ENCODE measurements at regions of chr11 and their contacts with region 1.

Region 1: DNA sequence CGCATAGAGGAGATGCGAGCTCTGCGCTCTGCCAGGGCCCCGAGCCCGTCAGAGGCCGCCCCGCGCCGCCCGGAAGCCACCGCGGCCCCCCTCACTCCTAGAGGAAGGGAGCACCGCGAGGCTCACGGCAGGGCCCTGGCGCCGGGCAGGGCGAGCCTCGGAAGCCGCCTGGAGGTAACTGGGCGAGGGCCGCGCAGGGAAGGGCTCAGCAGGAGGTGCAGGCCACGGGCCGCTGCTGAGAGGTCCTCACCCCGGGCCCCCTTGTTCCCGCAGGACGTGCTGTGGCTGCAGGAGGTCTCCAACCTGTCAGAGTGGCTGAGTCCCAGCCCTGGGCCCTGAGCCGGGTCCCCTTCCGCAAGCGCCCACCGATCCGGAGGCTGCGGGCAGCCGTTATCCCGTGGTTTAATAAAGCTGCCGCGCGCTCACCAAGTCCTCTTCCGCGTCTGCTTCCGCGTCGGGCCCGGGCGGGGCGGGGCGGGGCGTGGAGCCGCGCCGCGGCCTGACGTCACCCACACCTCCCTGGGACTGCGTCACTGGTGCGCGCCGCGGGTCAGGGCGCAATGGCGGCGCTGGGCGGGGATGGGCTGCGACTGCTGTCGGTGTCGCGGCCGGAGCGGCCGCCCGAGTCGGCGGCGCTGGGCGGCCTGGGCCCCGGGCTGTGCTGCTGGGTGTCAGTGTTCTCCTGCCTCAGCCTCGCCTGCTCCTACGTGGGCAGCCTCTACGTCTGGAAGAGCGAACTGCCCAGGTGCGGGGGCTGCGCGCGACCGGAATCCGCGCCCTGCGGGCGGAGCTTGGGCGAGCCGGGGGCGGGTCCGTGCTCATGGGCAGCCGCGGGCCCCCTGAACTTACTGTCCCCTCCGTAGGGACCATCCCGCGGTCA is at the start of gene RCE1:
- DNase-seq: peak; percentile 56 to 92
- H3K4me3 ChIP-seq: peak within 1 kb of the TSS; percentile 76 to 90
- H3K27ac ChIP-seq: peak within 1 kb of the TSS; percentile 93 to 99
- H3K4me1 ChIP-seq: peaks cover 12 to 23% of the 10 kb centered on the region in 2 donors
- H3K27me3 ChIP-seq: no peaks in the 10 kb centered on the region
- CTCF ChIP-seq: no peak
- total RNA-seq, gene RCE1: 45.7 TPM

Region 2: GRCh38 chr11:66344550-66345315 is 498.4 kb before region 1 on chr11 and contains the start of gene BRMS1:
- intact Hi-C with region 1: loop called (anchors 2 kb)
- DNase-seq: peak; percentile 94 to 99
- H3K4me3 ChIP-seq: peak within 1 kb of the TSS; percentile 65 to 90
- H3K27ac ChIP-seq: peak within 1 kb of the TSS; percentile 35 to 88
- H3K4me1 ChIP-seq: peaks cover 13 to 26% of the 10 kb centered on the region in 2 donors
- H3K27me3 ChIP-seq: no peaks in the 10 kb centered on the region
- CTCF ChIP-seq: peak; percentile 13 to 29 (median 23)
- total RNA-seq, gene BRMS1: 24.8 TPM

Region 3: DNA sequence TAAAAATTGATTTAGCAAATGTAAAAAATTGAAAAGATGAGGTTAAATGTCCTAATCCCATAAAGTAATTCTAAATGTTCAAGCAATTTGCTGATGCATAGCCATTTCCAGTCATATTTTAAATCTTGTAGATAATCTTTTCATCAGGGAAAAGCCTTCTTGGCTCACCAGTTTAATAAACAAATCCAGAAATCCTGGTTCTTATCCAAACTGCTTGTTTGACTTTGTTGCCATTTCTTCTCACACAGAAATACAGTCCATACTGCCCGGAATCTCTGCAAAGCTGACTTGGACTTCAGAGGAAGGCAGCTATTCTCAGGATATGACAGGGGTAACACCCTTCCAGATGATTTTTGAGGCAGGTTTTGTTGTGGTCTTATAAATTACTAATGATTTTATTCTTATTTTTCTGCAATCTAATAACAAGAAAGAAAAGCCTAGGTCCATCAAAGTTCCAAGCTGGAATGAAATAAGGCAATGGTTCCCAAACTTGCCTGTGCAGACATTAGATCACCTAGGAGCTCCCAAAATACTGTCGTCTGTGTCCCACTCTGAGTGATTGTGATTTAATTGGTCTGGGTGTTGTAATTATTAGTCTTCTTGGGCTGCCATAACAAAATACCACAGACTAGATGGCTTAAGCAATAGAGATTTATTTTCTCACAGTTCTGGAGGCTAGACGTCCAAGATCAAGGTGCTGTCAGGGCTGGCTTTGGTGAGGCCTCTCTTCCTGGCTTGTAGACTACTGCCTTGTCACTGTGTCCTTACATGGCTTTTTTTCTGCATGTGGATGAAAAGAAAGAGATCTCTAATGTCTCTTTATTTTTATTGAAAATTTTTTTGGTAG is 55.0 kb before region 1 on chr11:
- intact Hi-C with region 1: no loop called
- DNase-seq: no peak
- H3K4me3 ChIP-seq: no peak overlapping the region
- H3K27ac ChIP-seq: peak overlapping the region in 1 of 2 donors; percentile 10
- H3K4me1 ChIP-seq: peaks cover 0 to 7% of the 10 kb centered on the region in 2 donors
- H3K27me3 ChIP-seq: no peaks in the 10 kb centered on the region
- CTCF ChIP-seq: no peak

Region 4: DNA sequence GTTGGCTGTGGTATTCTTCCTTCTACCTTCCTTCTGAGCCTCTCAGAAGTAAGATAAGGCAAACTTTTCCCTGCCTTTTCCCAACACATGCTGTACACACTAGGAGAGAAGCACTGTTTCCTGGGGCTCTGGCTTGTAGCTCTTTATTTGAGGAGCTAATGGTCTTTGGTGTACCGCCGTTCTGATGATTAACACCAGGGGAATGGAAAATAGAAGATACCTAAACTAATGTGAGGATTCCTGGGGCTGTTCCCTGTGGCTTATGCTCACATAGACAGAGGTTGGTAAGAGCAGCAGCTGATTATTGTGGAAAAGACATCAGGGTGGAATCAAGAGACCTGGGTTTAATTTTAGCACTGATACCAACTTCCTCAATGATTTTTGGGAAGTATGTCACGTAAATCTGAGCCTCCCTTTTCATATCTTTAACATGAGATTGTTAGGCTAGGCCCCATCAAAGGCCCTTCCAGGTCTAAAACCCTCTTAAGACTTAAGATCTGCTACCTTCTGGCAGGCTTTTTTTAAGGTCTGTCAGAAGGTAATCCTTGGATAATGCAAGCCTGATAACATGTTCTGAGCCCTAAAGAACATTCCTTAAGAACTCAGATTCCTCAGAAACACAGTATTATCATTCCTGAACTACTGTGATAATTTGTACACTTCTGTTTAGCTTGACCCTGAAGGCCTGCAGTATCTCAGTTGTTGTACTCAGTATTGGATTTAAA is 24.7 kb before region 1 on chr11:
- intact Hi-C with region 1: no loop called
- DNase-seq: no peak
- H3K4me3 ChIP-seq: no peak overlapping the region
- H3K27ac ChIP-seq: no peak overlapping the region
- H3K4me1 ChIP-seq: no peaks in the 10 kb centered on the region
- H3K27me3 ChIP-seq: no peaks in the 10 kb centered on the region
- CTCF ChIP-seq: no peak

Region 5: DNA sequence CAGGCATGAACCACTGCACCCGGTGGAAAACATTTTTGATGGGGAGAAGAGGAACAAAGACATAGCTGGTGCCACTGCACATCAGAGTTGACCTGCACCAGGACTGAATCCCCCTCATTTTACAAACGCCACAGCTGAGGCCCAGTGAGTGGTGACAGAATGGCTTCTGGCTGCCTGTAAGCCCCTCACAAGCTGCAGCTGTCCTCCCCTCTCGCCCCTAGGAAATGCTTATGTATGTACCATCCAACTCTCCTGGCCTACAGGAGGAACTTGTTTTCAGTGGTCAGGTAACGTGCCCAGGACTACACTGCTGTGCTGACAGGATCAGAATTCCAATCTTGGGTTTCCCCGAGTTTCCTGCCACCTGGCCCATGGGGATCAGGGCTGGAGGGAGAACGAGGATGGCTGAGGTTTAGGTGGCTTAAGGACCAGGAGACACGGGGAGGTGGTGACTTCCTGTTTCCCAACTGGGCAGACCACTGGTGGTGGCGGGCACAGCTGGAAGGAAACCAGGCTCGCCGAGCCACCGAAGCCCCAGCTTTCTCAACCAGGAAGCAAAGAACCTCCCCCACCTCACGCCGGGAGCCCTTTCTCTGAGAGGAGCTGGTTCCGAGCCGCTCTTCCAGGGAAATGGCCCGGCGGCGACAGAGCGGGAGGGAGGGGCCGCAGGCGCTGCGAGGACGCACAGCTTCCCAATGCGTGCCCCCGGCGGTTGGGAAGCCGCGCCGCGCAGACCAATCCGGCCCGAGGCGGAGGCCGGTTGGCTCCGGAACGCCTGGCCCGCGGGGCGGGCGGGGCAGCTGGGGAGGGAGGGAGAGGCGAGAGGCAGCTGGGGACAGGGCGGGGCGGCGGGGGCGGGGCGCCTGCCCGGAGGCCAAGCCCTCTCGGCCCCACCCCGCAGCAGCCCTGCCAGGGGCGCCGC is 12.7 kb after region 1 on chr11:
- intact Hi-C with region 1: loop called (anchors 1 kb)
- DNase-seq: peak; percentile 78 to 96
- H3K4me3 ChIP-seq: peak overlapping the region; percentile 64 to 85
- H3K27ac ChIP-seq: peak overlapping the region; percentile 75 to 92
- H3K4me1 ChIP-seq: peaks cover 4 to 6% of the 10 kb centered on the region in 2 donors
- H3K27me3 ChIP-seq: no peaks in the 10 kb centered on the region
- CTCF ChIP-seq: no peak

Measured in ascending aorta (tissue), 2 donors.